Activated B cell treated with CpG ODN at 0.5 μM for 24 hours (primary cell): ENCODE measurements at regions of chr12 and their contacts with region 1.

Region 1: GRCh38 chr12:103401421-103401820 is 94.3 kb downstream of the C12orf42 start:
- DNase-seq: no peak
- ATAC-seq: no peak
- H3K4me3 Mint-ChIP-seq: no peak overlapping the region
- H3K27ac Mint-ChIP-seq: no peak overlapping the region
- H3K4me1 Mint-ChIP-seq: peaks cover 15% of the 10 kb centered on the region
- H3K27me3 Mint-ChIP-seq: no peaks in the 10 kb centered on the region
- CTCF ChIP-seq: no peak

Region 2: DNA sequence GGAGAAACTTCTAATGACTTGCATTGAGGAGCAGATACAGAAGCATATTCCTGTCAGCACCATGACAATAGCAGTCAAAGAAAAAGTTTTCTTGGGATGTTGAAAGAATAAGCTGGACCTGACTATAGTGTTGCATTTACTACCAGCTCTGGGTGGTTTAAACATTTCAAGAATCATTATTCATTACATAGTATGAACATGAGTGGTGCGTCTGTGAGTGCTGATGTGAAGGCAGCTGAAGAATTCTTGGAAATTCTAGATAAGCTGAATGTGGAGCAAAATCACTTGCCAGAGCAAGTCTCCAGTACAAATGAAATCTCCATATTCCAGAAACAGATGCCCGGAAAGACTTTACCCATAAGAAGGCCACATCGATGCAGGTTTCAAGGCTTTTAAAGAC is 140.7 kb after region 1 on chr12:
- CTCF ChIA-PET with region 1: no interaction called
- POLR2A ChIA-PET with region 1: no interaction called
- intact Hi-C with region 1: loop called (anchors 2 kb)
- DNase-seq: no peak
- ATAC-seq: no peak
- H3K4me3 Mint-ChIP-seq: no peak overlapping the region
- H3K27ac Mint-ChIP-seq: no peak overlapping the region
- H3K4me1 Mint-ChIP-seq: peaks cover 4% of the 10 kb centered on the region
- H3K27me3 Mint-ChIP-seq: peaks cover 2% of the 10 kb centered on the region
- CTCF ChIP-seq: no peak